ENCODE measurements at regions of chr1 and their contacts with region 1.

Region 1: DNA sequence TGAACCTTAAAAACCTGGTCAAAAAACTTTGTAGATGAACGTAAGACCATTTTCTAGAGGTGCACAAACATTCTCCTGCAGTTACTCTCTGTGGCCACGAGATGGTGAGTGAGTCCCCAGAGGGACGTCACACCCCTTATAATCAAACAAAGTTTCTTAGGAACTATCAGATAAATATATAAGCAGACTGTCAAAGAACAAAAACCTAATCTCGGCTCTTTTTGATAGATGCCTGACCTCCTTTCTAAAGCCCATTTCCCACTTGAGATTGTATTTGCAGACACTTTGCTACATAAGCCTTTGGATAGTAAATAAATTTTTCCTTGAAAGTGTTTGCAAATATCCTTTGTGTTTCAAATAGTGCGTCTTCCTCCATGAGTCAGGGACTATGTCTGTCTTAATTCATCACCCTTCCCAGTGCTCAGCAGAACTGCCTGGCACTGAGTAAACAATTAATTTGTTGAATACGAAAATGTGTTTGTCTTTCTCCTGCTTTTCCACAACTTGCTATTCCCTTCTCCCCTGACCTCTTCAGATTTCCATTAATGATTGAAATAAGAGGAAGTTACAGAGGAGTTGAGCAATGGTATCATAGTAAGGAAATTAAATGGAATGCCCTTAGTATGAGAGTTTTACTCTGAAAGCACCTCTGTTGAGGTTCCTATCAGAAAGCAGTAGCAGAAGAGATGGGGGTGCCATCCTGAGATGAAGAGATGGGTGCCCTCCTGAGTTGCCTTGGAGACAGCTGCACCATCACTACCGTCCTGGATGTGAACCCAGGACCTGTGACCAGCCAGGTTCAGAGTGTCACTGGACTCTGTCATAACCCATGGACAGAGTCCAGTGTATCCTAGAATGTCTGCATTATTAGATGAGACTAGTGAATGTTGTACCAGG is 57.8 kb upstream of the RAVER2 start:
- DNase-seq: no peak
- ATAC-seq: peak; percentile 74
- H3K4me3 ChIP-seq: no peak overlapping the region
- H3K27ac ChIP-seq: no peak overlapping the region
- H3K4me1 ChIP-seq: no peaks in the 10 kb centered on the region
- H3K27me3 ChIP-seq: peaks cover 0 to 2% of the 10 kb centered on the region in 2 experiments; a peak in 2 of 4 replicates
- CTCF ChIP-seq: peak; percentile 64 to 83 (median 75)
- EP300 ChIP-seq: no peak
- POLR2A ChIP-seq: no peak
- RAD21 ChIP-seq: peak; percentile 62

Region 2: GRCh38 chr1:64675718-64676345 is 11.2 kb before region 1 on chr1:
- CTCF ChIA-PET with region 1: interaction called, 12 read pairs
- POLR2A ChIA-PET with region 1: no interaction called
- RAD21 ChIA-PET with region 1: interaction called, 3 read pairs
- SMC1A ChIA-PET with region 1: interaction called, 3 read pairs
- in situ Hi-C with region 1: no loop called
- intact Hi-C with region 1: no loop called
- DNase-seq: no peak
- ATAC-seq: peak; percentile 40; the same call in 1 of the 3 replicates
- H3K4me3 ChIP-seq: no peak overlapping the region
- H3K27ac ChIP-seq: no peak overlapping the region
- H3K4me1 ChIP-seq: no peaks in the 10 kb centered on the region
- H3K27me3 ChIP-seq: no peaks in the 10 kb centered on the region
- CTCF ChIP-seq: peak; percentile 43 to 66 (median 47)
- EP300 ChIP-seq: no peak
- POLR2A ChIP-seq: no peak
- RAD21 ChIP-seq: peak; percentile 36

Region 3: GRCh38 chr1:64721576-64722145 is 34.6 kb after region 1 on chr1:
- CTCF ChIA-PET with region 1: no interaction called
- POLR2A ChIA-PET with region 1: no interaction called
- RAD21 ChIA-PET with region 1: no interaction called
- SMC1A ChIA-PET with region 1: no interaction called
- in situ Hi-C with region 1: no loop called
- intact Hi-C with region 1: no loop called
- DNase-seq: no peak
- ATAC-seq: no peak
- H3K4me3 ChIP-seq: no peak overlapping the region
- H3K27ac ChIP-seq: no peak overlapping the region
- H3K4me1 ChIP-seq: no peaks in the 10 kb centered on the region
- H3K27me3 ChIP-seq: no peaks in the 10 kb centered on the region
- CTCF ChIP-seq: no peak
- EP300 ChIP-seq: no peak
- POLR2A ChIP-seq: no peak
- RAD21 ChIP-seq: no peak

Region 4: DNA sequence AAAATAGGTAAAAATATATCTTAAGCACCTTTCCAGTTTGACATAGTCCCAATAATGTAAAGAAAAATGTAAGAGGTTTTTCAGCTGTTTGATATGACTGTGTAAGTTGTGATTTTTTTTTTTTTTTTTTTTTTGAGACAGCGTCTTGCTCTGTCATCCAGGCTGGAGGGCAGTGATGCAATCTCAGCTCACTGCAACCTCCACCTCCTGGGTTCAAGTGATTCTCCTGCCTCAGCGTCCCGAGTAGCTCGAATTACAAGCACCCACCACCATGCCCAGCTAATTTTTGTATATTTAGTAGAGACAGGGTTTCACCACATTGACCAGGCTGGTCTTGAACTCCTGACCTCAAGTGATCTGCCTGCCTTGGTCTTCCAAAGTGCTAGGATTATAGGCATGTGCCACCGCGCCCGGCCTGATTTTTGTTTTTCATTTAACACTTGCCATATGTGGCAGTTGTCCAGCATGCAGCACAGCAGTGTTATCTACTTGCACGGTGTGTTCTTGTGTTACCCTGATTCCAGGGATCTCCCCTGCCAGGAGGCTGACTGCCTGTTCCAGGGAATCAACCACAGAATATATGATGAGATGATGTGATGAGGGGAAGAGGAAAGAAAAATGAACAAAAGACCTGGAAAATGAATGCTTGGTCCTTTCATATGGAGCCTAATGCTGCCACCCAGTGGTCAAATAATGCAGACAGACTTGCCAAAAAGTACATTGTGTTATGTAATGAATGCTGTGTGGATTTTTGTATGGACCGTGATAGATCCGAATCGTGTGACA is 136.8 kb after region 1 on chr1:
- CTCF ChIA-PET with region 1: interaction called, 3 read pairs
- POLR2A ChIA-PET with region 1: no interaction called
- RAD21 ChIA-PET with region 1: no interaction called
- SMC1A ChIA-PET with region 1: interaction called, 5 read pairs
- in situ Hi-C with region 1: no loop called
- intact Hi-C with region 1: loop called (anchors 1 kb)
- DNase-seq: peak; percentile 11
- ATAC-seq: peak; percentile 82
- H3K4me3 ChIP-seq: no peak overlapping the region
- H3K27ac ChIP-seq: no peak overlapping the region
- H3K4me1 ChIP-seq: peaks cover under 1% of the 10 kb centered on the region; the same call in 1 of the 2 replicates
- H3K27me3 ChIP-seq: no peaks in the 10 kb centered on the region
- CTCF ChIP-seq: peak; percentile 65 to 84 (median 78)
- EP300 ChIP-seq: no peak
- POLR2A ChIP-seq: no peak
- RAD21 ChIP-seq: peak; percentile 74

Region 5: GRCh38 chr1:65027666-65028358 is 340.7 kb after region 1 on chr1:
- CTCF ChIA-PET with region 1: no interaction called
- POLR2A ChIA-PET with region 1: no interaction called
- RAD21 ChIA-PET with region 1: no interaction called
- SMC1A ChIA-PET with region 1: interaction called, 3 read pairs
- in situ Hi-C with region 1: loop called (anchors 25 kb)
- intact Hi-C with region 1: no loop called
- DNase-seq: no peak
- ATAC-seq: no peak
- H3K4me3 ChIP-seq: no peak overlapping the region
- H3K27ac ChIP-seq: no peak overlapping the region
- H3K4me1 ChIP-seq: no peaks in the 10 kb centered on the region
- H3K27me3 ChIP-seq: peaks cover 0 to 3% of the 10 kb centered on the region in 2 experiments; a peak in 3 of 4 replicates
- CTCF ChIP-seq: no peak
- EP300 ChIP-seq: no peak
- POLR2A ChIP-seq: no peak
- RAD21 ChIP-seq: no peak

Region 6: GRCh38 chr1:65036545-65037180 is 349.6 kb after region 1 on chr1:
- CTCF ChIA-PET with region 1: no interaction called
- POLR2A ChIA-PET with region 1: no interaction called
- RAD21 ChIA-PET with region 1: no interaction called
- SMC1A ChIA-PET with region 1: interaction called, 3 read pairs
- in situ Hi-C with region 1: loop called (anchors 25 kb)
- intact Hi-C with region 1: loop called (anchors 2 kb)
- DNase-seq: no peak
- ATAC-seq: no peak
- H3K4me3 ChIP-seq: no peak overlapping the region
- H3K27ac ChIP-seq: no peak overlapping the region
- H3K4me1 ChIP-seq: no peaks in the 10 kb centered on the region; the same call in 1 of the 2 replicates
- H3K27me3 ChIP-seq: no peaks in the 10 kb centered on the region; a peak in 1 of 4 replicates
- CTCF ChIP-seq: no peak
- EP300 ChIP-seq: no peak
- POLR2A ChIP-seq: no peak
- RAD21 ChIP-seq: no peak

Region 7: GRCh38 chr1:65075123-65075976 is 388.3 kb after region 1 on chr1:
- CTCF ChIA-PET with region 1: no interaction called
- POLR2A ChIA-PET with region 1: no interaction called
- RAD21 ChIA-PET with region 1: no interaction called
- SMC1A ChIA-PET with region 1: no interaction called
- in situ Hi-C with region 1: no loop called
- intact Hi-C with region 1: loop called (anchors 5 kb)
- DNase-seq: no peak
- ATAC-seq: peak; percentile 95
- H3K4me3 ChIP-seq: no peak overlapping the region
- H3K27ac ChIP-seq: no peak overlapping the region
- H3K4me1 ChIP-seq: no peaks in the 10 kb centered on the region
- H3K27me3 ChIP-seq: no peaks in the 10 kb centered on the region; a peak in 1 of 4 replicates
- CTCF ChIP-seq: peak; percentile 72 to 84 (median 74)
- EP300 ChIP-seq: no peak
- POLR2A ChIP-seq: no peak
- RAD21 ChIP-seq: peak; percentile 67